ENCODE measurements at regions of chr14 and their contacts with region 1.

Region 1: GRCh38 chr14:104665657-104666522 is 23.5 kb upstream of the INF2 start:
- DNase-seq: peak; percentile 37 to 96 (median 92)
- H3K4me3 ChIP-seq: peak overlapping the region in 6 of 59 donors; percentile 2 to 29 (median 12)
- H3K27ac ChIP-seq: peak overlapping the region; percentile 65 to 100 (median 98)
- H3K27me3 ChIP-seq: no peaks in the 10 kb centered on the region
- CTCF ChIP-seq: peak in 54 of 56 donors; percentile 27 to 82 (median 62)

Region 2: DNA sequence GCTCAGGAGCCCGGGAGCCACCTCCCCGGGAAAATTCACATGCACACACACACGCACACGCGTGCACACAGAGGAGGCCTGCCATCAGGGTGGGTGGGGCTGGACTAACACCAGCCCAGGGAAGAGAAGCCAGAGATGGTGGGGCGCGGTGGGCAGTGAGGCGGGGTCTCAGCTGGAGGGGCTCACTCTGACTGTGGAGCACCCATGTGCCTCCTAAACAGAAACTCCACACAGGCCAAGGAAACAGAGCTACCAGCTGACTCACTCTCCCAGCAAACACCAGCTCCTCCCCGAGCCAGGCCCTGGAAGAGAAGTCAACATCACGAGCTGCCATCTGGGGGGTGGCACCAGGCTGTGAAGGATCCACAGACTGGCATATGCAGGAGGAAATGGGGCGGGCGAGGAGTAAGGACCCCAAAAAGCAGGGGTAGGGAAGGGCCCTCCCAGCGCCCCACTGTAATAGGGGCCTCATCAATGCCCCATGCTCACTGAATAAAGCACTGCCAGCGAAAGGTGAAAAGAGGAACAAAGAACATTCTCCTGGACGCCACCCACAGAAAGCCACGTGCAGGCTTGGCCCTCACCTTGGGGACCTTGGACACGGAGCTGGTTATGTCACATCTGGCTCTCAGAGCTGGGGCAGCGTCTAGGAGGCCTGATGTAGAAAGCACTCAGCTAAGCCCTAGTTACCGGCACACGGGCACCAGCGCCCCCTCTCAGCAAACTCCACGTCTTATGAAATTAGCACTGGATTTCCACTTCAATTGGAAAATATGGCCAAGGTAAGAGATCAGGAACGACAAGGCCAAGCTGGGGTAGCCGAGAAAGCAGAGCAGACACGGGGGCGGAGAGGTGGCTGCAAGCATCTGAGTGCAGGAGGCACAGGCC is 15.2 kb after region 1 on chr14:
- intact Hi-C with region 1: loop called (anchors 1 kb)
- DNase-seq: peak in 8 of 10 donors; percentile 86 to 94 (median 91)
- H3K4me3 ChIP-seq: peak overlapping the region; percentile 21 to 68 (median 49)
- H3K27ac ChIP-seq: peak overlapping the region; percentile 75 to 100 (median 99)
- H3K27me3 ChIP-seq: no peaks in the 10 kb centered on the region
- CTCF ChIP-seq: peak in 50 of 56 donors; percentile 8 to 70 (median 46)

Region 3: DNA sequence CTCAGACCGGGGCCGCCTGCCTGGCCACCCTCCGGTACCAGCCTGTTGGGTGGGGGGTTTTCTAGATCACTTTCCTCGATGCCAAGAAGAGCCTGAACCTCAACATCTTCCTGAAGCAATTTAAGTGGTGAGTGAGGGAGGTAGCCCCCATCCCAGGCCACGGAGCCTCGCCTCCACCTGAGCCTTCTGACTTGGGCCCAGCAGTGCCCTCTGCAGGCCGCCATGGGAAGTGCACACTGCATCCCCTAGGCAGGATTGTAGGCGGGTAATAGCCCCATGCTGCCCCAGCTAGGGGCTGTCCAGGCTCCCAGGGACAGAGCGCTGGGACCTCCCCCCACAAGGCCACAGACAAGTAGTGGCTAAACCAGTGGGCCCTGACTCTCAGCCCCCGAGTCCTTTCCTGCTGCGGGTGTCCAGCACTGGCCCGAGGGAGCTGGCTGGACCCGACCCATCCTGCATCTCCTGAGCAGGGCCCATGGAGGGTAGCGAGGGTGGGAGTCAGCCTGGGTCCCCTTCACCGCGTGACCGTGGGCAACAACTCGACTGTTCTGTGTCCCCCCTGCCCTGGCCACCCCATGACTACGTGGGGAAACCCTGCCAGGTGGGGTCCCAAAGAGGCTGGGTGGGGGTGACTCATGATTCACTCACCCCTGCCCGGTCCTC is 42.8 kb after region 1 on chr14:
- intact Hi-C with region 1: loop called in 1 of 2 experiments (anchors 1 kb)
- DNase-seq: peak in 8 of 10 donors; percentile 49 to 82 (median 74)
- H3K4me3 ChIP-seq: no peak overlapping the region
- H3K27ac ChIP-seq: peak overlapping the region in 53 of 59 donors; percentile 1 to 86 (median 70)
- H3K27me3 ChIP-seq: no peaks in the 10 kb centered on the region
- CTCF ChIP-seq: peak; percentile 92 to 100 (median 98)

Measured in dorsolateral prefrontal cortex (tissue), 120 donors.